HEK293 (cell line): ENCODE measurements at regions of chr10 and their contacts with region 1.

Region 1: DNA sequence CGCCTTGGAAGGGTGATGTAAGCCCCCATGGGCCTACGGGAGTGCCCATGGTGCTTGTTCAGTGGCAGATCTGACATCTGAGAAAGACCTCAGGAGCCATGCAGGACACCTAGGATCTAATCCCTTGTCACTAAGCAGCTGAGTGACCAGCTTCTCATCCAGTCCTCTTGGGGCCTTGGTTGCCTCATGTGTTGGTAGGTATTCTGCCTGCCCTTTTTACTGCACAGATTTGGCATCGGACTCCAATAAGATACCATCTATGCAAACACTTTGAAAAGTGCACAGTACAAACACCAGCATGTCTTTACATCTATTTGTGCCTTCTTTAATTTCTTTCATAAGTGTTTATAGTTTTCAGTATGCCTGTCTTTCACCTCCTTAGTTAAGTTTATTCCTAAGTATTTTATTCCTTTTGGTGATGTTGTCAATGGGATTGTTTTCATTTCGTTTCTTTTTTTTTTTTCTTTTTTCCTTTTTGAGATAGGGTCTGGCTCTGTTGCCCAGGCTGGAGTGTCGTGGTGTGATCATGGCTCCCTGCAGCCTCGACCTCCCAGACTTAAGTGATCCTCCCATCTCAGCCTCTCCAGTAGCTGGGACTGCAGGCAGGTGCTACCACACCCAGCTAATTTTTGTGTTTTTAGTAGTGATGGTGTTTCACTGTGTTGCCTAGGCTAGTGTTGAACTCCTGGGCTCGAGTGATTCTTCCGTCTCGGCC is 10.4 kb downstream of the STOX1 start:
- H3K4me3 ChIP-seq: no peak overlapping the region
- H3K27ac ChIP-seq: no peak overlapping the region
- H3K4me1 ChIP-seq: no peaks in the 10 kb centered on the region
- CTCF ChIP-seq: no peak

Region 2: DNA sequence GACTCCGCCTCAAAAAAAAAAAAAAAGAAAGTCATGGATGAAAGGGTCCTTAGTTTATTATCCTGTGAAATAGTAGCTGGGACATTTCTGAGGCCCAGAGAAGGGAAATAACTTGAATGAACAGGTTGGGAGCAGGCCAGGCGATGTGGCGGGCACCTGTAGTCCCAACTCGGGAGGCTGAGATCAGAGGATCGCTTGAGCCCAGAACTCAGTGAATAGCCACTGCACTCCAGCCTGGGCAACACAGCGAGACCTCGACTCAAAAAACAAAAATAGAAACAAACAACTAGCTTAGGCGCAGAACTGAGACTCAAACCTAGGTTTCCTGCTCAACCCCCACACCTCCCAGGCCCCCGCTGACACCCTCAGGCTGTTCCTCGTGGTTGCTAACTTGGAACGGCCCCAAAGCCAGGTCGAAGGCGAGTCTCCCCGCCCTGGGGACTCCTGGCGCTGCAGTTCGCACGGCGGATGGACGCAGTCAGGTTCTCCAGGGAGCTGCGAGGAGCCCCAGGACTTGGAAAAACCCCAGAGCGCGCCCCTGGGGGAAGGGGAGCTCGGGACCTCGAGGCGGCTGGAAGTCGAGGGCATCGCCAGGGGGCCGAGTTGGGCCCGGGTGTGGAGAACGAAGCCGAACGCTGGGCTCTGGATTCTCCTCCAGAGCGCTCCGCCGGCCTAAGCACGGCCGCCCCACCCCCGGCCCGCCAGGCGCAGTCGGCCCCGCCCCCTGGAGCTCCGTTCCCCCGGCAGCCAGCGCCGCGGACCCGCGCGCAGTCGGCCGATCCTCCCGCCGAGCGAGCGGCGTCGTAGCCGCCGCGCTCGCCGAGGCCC is 10.8 kb before region 1 on chr10 and contains the start of gene STOX1:
- CTCF ChIA-PET with region 1: interaction called, 10 read pairs
- POLR2A ChIA-PET with region 1: interaction called, 14 read pairs
- H3K4me3 ChIP-seq: peak within 1 kb of the TSS; percentile 63
- H3K27ac ChIP-seq: peak within 1 kb of the TSS; percentile 84
- H3K4me1 ChIP-seq: peaks cover 3% of the 10 kb centered on the region; the same call in 1 of the 2 replicates
- CTCF ChIP-seq: peak; percentile 81